Esophagus muscularis mucosa (tissue), 4 donors: ENCODE measurements at regions of chr22 and their contacts with region 1.

Region 1: GRCh38 chr22:31019191-31019942 is 50.3 kb downstream of the TUG1 start:
- DNase-seq: no peak
- H3K4me3 ChIP-seq: no peak overlapping the region
- H3K27ac ChIP-seq: no peak overlapping the region
- H3K4me1 ChIP-seq: peaks cover 0 to 12% (median 5%) of the 10 kb centered on the region in 4 donors
- H3K27me3 ChIP-seq: no peaks in the 10 kb centered on the region
- CTCF ChIP-seq: no peak
- EP300 ChIP-seq: no peak
- POLR2A ChIP-seq: no peak

Region 2: DNA sequence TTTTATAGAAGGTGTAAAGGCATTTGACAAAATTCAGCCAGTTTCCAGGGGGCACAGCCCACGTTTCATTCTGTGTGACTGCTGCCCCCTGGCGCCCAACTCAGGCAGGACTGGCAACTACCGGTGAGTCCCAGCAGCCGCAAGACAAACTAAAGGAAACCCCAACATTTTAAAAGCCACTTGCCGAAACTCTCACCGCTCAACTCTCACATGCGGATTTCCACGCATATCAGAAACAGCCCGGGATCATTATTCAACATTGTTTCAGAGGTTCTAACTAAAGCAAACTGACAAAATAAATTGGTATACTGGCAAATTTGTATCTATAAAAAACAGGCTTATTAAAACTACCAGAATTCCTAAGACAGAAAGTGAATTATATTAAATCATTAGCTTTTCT is 99.0 kb before region 1 on chr22:
- intact Hi-C with region 1: no loop called
- DNase-seq: peak; percentile 95
- H3K4me3 ChIP-seq: peak overlapping the region in 1 of 4 donors; percentile 25
- H3K27ac ChIP-seq: no peak overlapping the region
- H3K4me1 ChIP-seq: peaks cover 8 to 18% (median 15%) of the 10 kb centered on the region in 4 donors
- H3K27me3 ChIP-seq: no peaks in the 10 kb centered on the region
- CTCF ChIP-seq: peak; percentile 82 to 93 (median 90)
- EP300 ChIP-seq: no peak
- POLR2A ChIP-seq: no peak

Region 3: DNA sequence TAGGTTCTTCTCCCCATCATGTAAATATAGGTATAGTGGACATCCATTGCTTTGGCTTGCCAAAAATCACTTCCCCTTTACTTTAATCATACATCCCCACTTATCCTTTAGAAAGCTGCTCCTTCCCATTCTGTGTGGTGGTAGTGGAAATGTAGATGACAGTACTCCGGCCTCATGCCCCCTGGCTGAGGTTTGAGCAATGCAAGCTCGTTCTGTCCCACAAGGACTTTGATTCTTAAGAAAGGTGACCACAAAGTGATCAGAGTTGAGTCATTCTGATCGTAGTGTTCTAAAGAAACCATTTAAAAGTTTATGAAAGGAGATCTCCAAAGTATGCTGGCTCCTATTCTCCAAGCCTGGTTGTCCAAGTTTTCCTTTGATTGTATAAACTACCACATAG is 39.4 kb before region 1 on chr22:
- intact Hi-C with region 1: loop called (anchors 5 kb)
- DNase-seq: no peak
- H3K4me3 ChIP-seq: no peak overlapping the region
- H3K27ac ChIP-seq: no peak overlapping the region
- H3K4me1 ChIP-seq: no peaks in the 10 kb centered on the region
- H3K27me3 ChIP-seq: no peaks in the 10 kb centered on the region
- CTCF ChIP-seq: no peak
- EP300 ChIP-seq: no peak
- POLR2A ChIP-seq: no peak

Region 4: DNA sequence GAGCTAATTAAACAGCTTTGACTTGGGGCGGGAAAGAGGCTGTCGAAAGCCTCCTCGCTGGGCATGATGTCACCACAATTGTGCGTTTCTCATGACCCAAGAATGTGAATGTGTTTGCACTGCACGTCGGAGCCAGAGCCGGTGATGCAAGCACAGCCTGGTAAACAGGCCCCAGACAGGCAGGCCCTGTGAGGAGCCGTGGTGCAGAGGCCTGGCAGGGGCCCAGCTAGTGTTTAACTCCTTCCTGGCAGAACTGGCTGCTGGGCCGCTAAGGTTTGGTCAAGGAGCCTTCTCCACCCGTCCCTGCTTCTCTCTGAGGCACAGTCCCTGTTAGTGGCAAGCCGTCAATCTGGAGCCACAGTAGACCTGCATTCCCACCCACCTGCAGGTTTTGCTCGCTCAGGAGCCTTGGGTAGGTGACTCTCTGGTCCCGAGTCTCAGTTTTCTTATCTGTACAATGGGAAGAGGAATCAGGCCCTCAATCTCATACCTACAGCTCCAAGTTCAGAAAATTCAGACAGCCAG is 36.3 kb after region 1 on chr22:
- intact Hi-C with region 1: no loop called
- DNase-seq: peak; percentile 96
- H3K4me3 ChIP-seq: no peak overlapping the region
- H3K27ac ChIP-seq: peak overlapping the region; percentile 88 to 97 (median 95)
- H3K4me1 ChIP-seq: peaks cover 20 to 60% (median 46%) of the 10 kb centered on the region in 4 donors
- H3K27me3 ChIP-seq: no peaks in the 10 kb centered on the region
- CTCF ChIP-seq: no peak
- EP300 ChIP-seq: peak; percentile 91
- POLR2A ChIP-seq: no peak